Dorsolateral prefrontal cortex (tissue), 120 donors: ENCODE measurements at regions of chr19 and their contacts with region 1.

Region 1: DNA sequence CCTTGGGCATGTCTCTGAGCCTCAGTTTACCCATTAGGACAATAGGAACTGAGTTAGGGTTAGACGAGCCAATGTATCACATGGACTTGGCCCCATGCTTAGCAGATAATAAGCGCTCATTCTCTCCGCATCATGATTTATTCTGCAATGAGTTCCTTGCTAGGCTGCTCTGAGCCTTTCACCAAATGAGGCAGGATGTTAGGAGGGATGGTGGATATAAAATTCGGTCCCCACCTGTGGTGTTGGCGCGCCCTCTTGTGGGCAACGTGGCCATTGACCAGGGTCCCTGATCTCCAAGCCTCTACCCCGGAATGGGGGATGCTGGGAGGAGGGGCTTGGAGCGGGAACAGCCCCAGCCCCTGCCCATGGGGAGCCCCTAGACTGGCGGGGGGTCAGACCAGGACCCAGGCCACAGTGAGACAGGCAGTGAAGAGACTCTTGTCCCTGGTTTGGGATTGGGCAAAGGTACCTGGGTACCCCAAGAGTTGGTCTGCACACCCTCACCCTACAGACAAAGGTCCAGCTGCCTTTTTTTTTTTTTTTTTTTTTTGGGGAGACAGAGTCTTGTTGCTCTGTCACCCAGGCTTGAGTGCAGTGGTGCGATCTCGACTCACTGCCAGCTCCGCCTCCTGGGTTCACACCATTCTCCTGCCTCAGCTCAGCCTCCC is 43.9 kb downstream of the CERS4 start:
- DNase-seq: peak; percentile 71 to 89 (median 84)
- H3K4me3 ChIP-seq: no peak overlapping the region
- H3K27ac ChIP-seq: peak overlapping the region in 34 of 59 donors; percentile 2 to 89 (median 36)
- H3K27me3 ChIP-seq: no peaks in the 10 kb centered on the region
- CTCF ChIP-seq: peak; percentile 89 to 99 (median 97)

Region 2: GRCh38 chr19:7970716-7971448 is 282.2 kb before region 1 on chr19:
- intact Hi-C with region 1: loop called in 1 of 2 experiments (anchors 10 kb)
- DNase-seq: peak in 6 of 10 donors; percentile 38 to 61 (median 49)
- H3K4me3 ChIP-seq: no peak overlapping the region
- H3K27ac ChIP-seq: peak overlapping the region in 8 of 59 donors; percentile 8 to 76 (median 48)
- H3K27me3 ChIP-seq: no peaks in the 10 kb centered on the region
- CTCF ChIP-seq: peak; percentile 42 to 83 (median 74)

Region 3: GRCh38 chr19:8005534-8006256 is 247.4 kb before region 1 on chr19 and contains the start of gene ELAVL1:
- intact Hi-C with region 1: loop called in 1 of 2 experiments (anchors 10 kb)
- DNase-seq: peak; percentile 72 to 94 (median 84)
- H3K4me3 ChIP-seq: peak within 1 kb of the TSS; percentile 73 to 99 (median 92)
- H3K27ac ChIP-seq: peak within 1 kb of the TSS in 56 of 59 donors; percentile 27 to 94 (median 81)
- H3K27me3 ChIP-seq: no peaks in the 10 kb centered on the region
- CTCF ChIP-seq: peak in 18 of 56 donors; percentile 9 to 47 (median 24)
- total RNA-seq, gene ELAVL1: 43.9 to 65.7 (median 53.2) TPM

Region 4: GRCh38 chr19:8158411-8159074 is 94.5 kb before region 1 on chr19:
- intact Hi-C with region 1: loop called (anchors 1 to 2 kb)
- DNase-seq: peak in 5 of 10 donors; percentile 35 to 73 (median 45)
- H3K4me3 ChIP-seq: no peak overlapping the region
- H3K27ac ChIP-seq: peak overlapping the region in 11 of 59 donors; percentile 7 to 60 (median 31)
- H3K27me3 ChIP-seq: no peaks in the 10 kb centered on the region
- CTCF ChIP-seq: peak; percentile 69 to 93 (median 83)

Region 5: DNA sequence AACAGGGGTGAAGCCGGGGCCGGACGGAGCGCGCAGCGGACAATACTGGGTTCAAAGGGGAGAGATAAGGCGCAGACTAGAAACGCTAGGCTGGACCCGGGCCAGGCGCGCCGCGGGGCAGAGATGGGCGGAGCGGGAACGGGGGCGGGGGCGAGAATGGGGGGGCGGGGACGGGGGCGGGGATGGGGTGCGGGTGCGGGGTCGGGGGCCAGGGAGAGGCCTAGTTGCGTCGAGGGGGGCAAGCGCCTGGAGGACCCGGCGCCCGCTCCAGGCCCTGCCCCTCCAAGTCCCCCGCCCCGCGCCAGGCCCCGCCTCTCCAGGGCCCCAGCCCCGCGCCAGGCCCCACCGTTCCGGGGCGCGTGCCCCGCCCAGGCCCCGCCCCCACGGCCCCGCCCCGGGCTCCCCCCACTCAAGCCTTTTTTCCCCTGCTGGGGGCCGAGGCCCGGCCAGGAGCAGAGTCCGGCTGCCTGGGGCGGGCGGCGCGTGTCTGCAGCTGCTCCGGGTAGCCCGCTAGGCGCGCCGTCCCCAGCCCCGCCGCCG is 44.1 kb before region 1 on chr19 and contains the start of gene CERS4:
- intact Hi-C with region 1: loop called (anchors 2 to 5 kb)
- DNase-seq: peak; percentile 72 to 93 (median 79)
- H3K4me3 ChIP-seq: peak within 1 kb of the TSS; percentile 63 to 96 (median 89)
- H3K27ac ChIP-seq: peak within 1 kb of the TSS; percentile 65 to 99 (median 97)
- H3K27me3 ChIP-seq: no peaks in the 10 kb centered on the region
- CTCF ChIP-seq: peak in 3 of 56 donors; percentile 5 to 28 (median 13)
- total RNA-seq, gene CERS4: 53.5 to 155 (median 97.3) TPM

Region 6: DNA sequence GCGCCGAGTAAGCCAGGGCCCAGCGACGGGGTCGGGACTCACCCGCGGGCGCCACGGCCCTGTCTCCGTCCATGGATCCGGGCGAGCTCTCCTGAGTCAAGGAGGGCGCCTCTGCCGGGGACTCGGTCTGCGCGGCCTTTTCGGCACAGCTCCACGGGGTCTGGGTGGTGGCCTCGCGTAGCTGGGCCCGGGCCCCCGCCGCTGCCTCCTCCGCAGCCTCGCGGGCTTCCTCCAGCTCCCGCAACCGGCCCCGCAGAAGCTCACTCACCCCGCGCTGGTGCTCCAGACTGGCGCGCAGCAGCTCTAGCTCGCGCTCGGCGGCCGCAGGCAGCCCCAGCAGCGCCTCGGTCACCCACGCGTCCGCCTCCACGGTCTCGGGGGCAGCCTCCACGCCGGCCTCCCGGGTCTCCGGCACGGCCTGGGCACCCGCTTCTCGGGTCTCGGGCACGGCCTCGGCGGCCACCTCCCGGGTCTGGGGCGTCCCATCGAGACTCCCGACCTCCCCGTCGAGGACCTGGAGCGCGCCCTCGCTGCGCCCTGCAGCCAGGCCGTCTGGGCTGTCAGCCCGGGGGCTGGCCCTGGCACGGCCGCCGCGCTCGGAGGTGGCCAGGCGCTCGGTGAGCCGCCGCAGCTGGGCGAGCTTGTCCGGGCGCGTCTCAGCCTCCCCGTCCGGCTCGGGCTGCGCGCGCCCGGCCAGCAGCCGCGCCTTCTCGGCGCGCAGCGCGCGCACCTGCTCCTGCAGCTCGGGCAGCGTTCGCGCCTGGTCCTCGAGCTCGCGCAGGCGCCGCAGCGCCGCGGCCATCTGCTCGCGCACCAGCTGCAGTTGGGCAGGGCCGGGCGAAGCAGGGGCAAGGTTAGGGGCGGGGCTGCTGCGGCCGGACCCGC is 81.6 kb after region 1 on chr19:
- intact Hi-C with region 1: no loop called
- DNase-seq: peak in 1 of 10 donors; percentile 61
- H3K4me3 ChIP-seq: peak overlapping the region in 47 of 59 donors; percentile 3 to 63 (median 37)
- H3K27ac ChIP-seq: no peak overlapping the region
- H3K27me3 ChIP-seq: peaks cover 0 to 49% (median 23%) of the 10 kb centered on the region in 45 donors
- CTCF ChIP-seq: no peak